Endothelial cell of umbilical vein (primary cell): ENCODE measurements at regions of chr15 and their contacts with region 1.

Region 1: GRCh38 chr15:98647774-98648653 is at the start of gene IGF1R:
- DNase-seq: peak; percentile 85
- H3K4me3 ChIP-seq: peak within 1 kb of the TSS; percentile 67 to 96 (median 75)
- H3K27ac ChIP-seq: peak within 1 kb of the TSS; percentile 62
- H3K4me1 ChIP-seq: peaks cover 12% of the 10 kb centered on the region
- H3K27me3 ChIP-seq: peaks cover 9 to 21% of the 10 kb centered on the region in 2 experiments
- CTCF ChIP-seq: peak in 1 of 2 donors; percentile 0
- POLR2A ChIP-seq: no peak
- total RNA-seq, gene IGF1R: 50.9 and 59.1 TPM in 2 replicates

Region 2: GRCh38 chr15:98442379-98442833 is 205.6 kb before region 1 on chr15:
- CTCF ChIA-PET with region 1: no interaction called
- POLR2A ChIA-PET with region 1: no interaction called
- dilution Hi-C with region 1: no loop called
- intact Hi-C with region 1: loop called (anchors 2 kb)
- DNase-seq: peak; percentile 71
- H3K4me3 ChIP-seq: no peak overlapping the region
- H3K27ac ChIP-seq: no peak overlapping the region
- H3K4me1 ChIP-seq: no peaks in the 10 kb centered on the region
- H3K27me3 ChIP-seq: no peaks in the 10 kb centered on the region
- CTCF ChIP-seq: peak; percentile 72 to 80
- POLR2A ChIP-seq: no peak

Region 3: DNA sequence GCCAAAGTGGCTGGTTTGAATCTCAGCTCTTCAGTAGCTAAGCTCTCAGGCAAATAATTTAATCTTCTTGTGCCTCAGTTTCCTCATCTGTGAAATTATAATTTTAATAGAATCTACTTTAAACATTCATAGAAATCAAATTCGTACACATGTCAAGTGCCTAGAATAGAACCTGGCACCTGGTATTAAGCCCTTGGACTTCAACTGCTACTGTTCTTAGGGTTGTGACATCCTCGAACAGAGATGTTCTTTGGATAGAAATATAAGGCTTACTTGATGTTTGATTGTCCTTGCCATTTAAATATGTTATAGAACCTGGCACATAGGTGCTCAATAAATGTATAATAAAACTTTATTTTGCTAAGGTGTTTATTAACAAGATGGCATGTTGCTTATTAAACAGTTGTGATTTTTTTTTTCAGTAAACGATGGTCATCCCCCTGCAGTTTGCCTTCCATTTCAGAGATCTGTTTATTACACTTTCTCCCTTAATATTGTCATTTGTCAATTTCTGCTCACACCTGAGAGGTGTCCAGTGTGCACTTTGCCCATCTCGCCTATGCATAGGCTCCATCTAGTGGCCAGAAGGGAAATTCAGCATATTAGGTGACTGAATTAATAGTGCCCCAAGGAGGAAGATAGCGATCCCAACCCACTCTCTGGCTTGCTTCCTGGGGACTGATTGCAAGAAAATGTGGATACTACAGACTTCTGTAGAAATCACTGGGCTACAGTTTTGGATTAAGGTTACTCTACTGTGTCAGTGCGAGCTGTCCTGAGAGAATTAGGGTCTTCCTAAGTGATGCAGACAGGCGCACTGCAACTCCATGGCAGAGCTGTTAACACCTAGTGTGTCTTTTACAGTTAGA is 11.1 kb after region 1 on chr15:
- CTCF ChIA-PET with region 1: interaction called, 16 read pairs
- POLR2A ChIA-PET with region 1: no interaction called
- dilution Hi-C with region 1: no loop called
- intact Hi-C with region 1: loop called (anchors 1 kb)
- DNase-seq: peak; percentile 51
- H3K4me3 ChIP-seq: no peak overlapping the region
- H3K27ac ChIP-seq: no peak overlapping the region
- H3K4me1 ChIP-seq: peaks cover 23% of the 10 kb centered on the region
- H3K27me3 ChIP-seq: no peaks in the 10 kb centered on the region
- CTCF ChIP-seq: peak; percentile 75 to 81
- POLR2A ChIP-seq: no peak

Region 4: DNA sequence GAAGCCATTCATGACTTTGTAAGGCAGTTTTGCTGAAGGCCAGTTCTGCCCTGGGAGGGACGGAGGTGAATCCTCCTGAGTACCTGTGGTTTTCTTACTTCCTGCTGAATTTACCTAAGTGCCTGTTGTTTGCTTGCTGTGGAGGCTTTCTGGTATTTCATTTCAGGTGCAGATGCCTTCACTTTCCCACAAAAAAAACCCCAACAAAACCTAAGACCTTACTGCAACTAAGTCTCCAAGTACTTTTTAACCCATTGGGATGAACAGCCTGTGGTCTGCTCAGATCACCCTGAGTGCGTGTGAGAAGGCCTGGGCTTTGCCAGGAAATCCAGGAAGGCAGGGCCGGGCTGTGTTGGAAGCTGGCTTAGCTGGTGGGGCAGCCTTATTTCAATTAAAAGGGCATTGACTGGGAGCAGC is 65.6 kb after region 1 on chr15:
- CTCF ChIA-PET with region 1: no interaction called
- POLR2A ChIA-PET with region 1: no interaction called
- dilution Hi-C with region 1: no loop called
- intact Hi-C with region 1: no loop called
- DNase-seq: peak; percentile 31
- H3K4me3 ChIP-seq: no peak overlapping the region
- H3K27ac ChIP-seq: no peak overlapping the region
- H3K4me1 ChIP-seq: peaks cover 3% of the 10 kb centered on the region
- H3K27me3 ChIP-seq: no peaks in the 10 kb centered on the region
- CTCF ChIP-seq: no peak
- POLR2A ChIP-seq: no peak

Region 5: GRCh38 chr15:98727115-98728085 is 79.4 kb after region 1 on chr15:
- CTCF ChIA-PET with region 1: no interaction called
- POLR2A ChIA-PET with region 1: no interaction called
- dilution Hi-C with region 1: no loop called
- intact Hi-C with region 1: loop called (anchors 1 kb)
- DNase-seq: peak; percentile 92
- H3K4me3 ChIP-seq: no peak overlapping the region
- H3K27ac ChIP-seq: peak overlapping the region; percentile 98
- H3K4me1 ChIP-seq: peaks cover 35% of the 10 kb centered on the region
- H3K27me3 ChIP-seq: no peaks in the 10 kb centered on the region
- CTCF ChIP-seq: no peak
- POLR2A ChIP-seq: no peak

Region 6: DNA sequence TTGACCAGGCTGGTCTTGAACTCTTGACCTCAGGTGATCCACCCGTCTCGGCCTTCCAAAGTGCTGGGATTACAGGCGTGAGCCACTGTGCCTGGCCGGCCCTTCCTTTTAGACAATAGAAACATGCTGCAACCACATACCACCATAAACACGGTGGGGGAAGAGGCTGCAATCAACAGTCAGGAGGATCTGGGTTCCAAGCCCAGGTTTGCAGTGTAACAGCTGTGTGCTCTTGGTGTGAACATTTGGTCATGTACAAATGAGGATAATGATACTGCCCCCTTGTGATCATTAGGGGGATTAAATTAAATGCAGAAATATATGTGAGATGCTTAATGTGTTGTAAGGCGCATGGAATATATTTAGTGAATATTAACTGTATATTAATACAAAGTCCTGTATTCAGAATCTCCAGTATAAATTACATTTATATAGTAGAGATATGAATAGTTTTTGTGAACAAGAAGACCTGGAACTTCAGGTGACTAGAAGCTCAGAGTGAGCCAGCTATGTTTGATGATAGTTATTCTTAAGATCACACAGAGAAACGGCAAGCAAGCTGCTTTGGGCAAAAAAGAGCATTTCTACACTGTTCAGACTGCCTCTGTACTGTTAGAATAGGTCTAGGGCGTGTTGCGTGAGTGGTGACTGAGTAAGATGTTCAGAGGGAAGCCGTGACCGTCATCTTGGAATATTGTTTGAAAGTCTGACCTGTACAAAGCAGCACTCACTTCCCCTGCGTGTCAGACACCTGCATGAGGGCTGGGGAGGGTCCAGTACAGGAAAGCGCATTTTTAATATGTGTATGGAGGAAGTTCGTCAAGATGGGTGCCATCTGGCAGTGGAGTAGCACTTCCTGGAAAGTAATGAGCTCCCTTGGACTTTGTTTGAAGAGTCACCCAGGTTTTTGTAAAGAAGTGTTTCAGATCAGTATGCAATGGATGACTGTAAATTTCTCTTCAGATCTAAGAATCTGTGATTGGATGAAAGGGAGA is 233.8 kb after region 1 on chr15:
- CTCF ChIA-PET with region 1: interaction called, 5 read pairs
- POLR2A ChIA-PET with region 1: no interaction called
- dilution Hi-C with region 1: loop called (anchors 25 kb)
- intact Hi-C with region 1: loop called (anchors 1 kb)
- DNase-seq: peak; percentile 49
- H3K4me3 ChIP-seq: no peak overlapping the region
- H3K27ac ChIP-seq: no peak overlapping the region
- H3K4me1 ChIP-seq: peaks cover 2% of the 10 kb centered on the region
- H3K27me3 ChIP-seq: no peaks in the 10 kb centered on the region
- CTCF ChIP-seq: peak in 1 of 2 donors; percentile 41
- POLR2A ChIP-seq: no peak

Region 7: DNA sequence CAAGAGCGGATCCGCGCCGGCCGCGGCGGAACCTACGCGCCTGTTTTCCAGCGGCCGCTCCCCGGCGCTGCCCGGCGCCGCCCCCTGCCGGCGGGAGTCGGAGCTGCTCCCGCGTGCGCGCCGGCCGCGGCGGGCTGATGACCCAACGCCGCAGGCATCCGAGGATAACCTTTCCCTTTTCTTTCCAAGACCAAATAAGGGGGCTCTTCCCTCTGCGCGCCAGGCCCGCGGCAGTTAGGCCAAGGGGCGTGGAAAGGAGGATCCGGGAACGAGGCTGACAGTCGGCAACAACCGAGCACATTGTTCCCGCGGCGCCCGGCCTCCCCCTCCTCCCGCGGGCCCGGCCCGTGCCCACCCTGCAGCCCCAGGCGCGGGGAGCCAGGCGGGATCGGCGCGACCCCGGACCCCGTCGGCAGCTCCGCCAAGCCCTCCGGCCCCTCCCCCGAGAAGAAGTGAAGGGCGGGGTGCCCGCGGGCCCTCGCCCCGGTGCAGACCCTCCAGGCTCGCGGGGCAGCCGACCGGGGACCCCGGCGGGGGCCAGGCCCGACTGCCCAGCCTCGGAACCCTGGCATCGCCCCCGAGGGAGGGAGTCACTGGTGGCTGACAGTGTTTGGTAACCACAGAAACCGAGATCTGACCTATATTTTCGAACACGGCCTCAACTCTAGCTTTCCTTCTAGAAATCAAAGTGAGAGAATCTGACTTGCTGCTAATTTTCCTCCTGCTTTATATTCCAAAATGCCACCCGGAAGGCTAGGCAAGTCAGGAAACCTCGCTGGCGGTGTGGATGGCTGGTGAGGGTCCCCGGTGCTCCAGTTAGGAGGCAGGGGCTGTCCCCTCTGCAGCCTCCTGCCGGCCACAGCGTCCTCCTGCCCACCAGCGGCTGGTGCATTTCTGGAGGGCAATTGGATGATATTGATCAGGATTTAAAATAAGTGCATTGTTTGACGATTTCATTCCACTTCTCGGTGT is 411.3 kb after region 1 on chr15:
- CTCF ChIA-PET with region 1: interaction called, 6 read pairs
- POLR2A ChIA-PET with region 1: no interaction called
- dilution Hi-C with region 1: no loop called
- intact Hi-C with region 1: loop called (anchors 1 kb)
- DNase-seq: peak; percentile 61
- H3K4me3 ChIP-seq: peak overlapping the region; percentile 34 to 60 (median 40)
- H3K27ac ChIP-seq: peak overlapping the region; percentile 12
- H3K4me1 ChIP-seq: peaks cover 8% of the 10 kb centered on the region
- H3K27me3 ChIP-seq: peaks cover 0 to 5% of the 10 kb centered on the region in 2 experiments
- CTCF ChIP-seq: peak; percentile 56 to 85
- POLR2A ChIP-seq: no peak